ENCODE measurements at regions of chr3 and their contacts with region 1.

Region 1: GRCh38 chr3:108250626-108251025 is 28.4 kb upstream of the IFT57 start:
- DNase-seq: no peak
- H3K4me3 ChIP-seq: no peak overlapping the region
- CTCF ChIP-seq: no peak
- POLR2A ChIP-seq: no peak

Region 2: GRCh38 chr3:107189158-107189791 is 1061.4 kb before region 1 on chr3:
- intact Hi-C with region 1: no loop called
- DNase-seq: no peak
- H3K4me3 ChIP-seq: no peak overlapping the region
- CTCF ChIP-seq: no peak
- POLR2A ChIP-seq: no peak

Region 3: DNA sequence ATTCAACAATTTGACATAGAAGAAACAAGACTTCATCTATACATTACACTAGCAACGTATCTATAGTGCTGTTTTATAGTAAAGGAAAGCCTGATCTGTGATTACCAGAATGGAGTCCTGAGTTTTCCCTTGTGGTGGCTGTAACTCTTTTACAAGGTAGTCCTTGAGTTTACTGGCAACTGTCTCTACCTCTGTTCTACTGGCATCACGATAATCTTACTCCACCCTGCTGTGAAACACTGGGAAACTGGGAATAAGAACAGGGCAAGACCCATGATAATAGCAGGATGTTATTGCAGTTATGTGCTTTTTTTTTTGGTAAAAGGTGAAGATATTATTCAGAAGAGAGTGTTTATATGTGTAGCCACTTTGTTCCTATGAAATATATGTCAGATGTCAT is 33.4 kb after region 1 on chr3:
- intact Hi-C with region 1: loop called (anchors 1 kb)
- DNase-seq: no peak
- H3K4me3 ChIP-seq: no peak overlapping the region
- CTCF ChIP-seq: no peak
- POLR2A ChIP-seq: no peak

Region 4: GRCh38 chr3:108328821-108329486 is 78.3 kb after region 1 on chr3:
- intact Hi-C with region 1: no loop called
- DNase-seq: no peak
- H3K4me3 ChIP-seq: no peak overlapping the region
- CTCF ChIP-seq: no peak
- POLR2A ChIP-seq: no peak

Region 5: GRCh38 chr3:108404368-108404767 is 153.7 kb after region 1 on chr3:
- intact Hi-C with region 1: no loop called
- DNase-seq: no peak
- H3K4me3 ChIP-seq: no peak overlapping the region
- CTCF ChIP-seq: no peak
- POLR2A ChIP-seq: no peak

Measured in lower leg skin (tissue), 4 donors.